ENCODE measurements at regions of chr10 and their contacts with region 1.

Region 1: GRCh38 chr10:86521678-86522509 is at the start of gene WAPL:
- DNase-seq: peak; percentile 96 to 97
- H3K4me3 ChIP-seq: peak within 1 kb of the TSS; percentile 79 to 97 (median 96)
- H3K27ac ChIP-seq: peak within 1 kb of the TSS; percentile 85 to 97 (median 89)
- H3K4me1 ChIP-seq: peaks cover 57 to 69% of the 10 kb centered on the region in 2 donors
- H3K27me3 ChIP-seq: no peaks in the 10 kb centered on the region
- CTCF ChIP-seq: no peak
- POLR2A ChIP-seq: peak; percentile 8 to 89
- total RNA-seq, gene WAPL: 44.2 to 62.1 (median 51.7) TPM

Region 2: GRCh38 chr10:86337121-86337601 is 184.7 kb before region 1 on chr10:
- intact Hi-C with region 1: no loop called
- DNase-seq: no peak
- H3K4me3 ChIP-seq: no peak overlapping the region
- H3K27ac ChIP-seq: no peak overlapping the region
- H3K4me1 ChIP-seq: peaks cover 39 to 50% of the 10 kb centered on the region in 2 donors
- H3K27me3 ChIP-seq: no peaks in the 10 kb centered on the region
- CTCF ChIP-seq: no peak
- POLR2A ChIP-seq: no peak

Region 3: DNA sequence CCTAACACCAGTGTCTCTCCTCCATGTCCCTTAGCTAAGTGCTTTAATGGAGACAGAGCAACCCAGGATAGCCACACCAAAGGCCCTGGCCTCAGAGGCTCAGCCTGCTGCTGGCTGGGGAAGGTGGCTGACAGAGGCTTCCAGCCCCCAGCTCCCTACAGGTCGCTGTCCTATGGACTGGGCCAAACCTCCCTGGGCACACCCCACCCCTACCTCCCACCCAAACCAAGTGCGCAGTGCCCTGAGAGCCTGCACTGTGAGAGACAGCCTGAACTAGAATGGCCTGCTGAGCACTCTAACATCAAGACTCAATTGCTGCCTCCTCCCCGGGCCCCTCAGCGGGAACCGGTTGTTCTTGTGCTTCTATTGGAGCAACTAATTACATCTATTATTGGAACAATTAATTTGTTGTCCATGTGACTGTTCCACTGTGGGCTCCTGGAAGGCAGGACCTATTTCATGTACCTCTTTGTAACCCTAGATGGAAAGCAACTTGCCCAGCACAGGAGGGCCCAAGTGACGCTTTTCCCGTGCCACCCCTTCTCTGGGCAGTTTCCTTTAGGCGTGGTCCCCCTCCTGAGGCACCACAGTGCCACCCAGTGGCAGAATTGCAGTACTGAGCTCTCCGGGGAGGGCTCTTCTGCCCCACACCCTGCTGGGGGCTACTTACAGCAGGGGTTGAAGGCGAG is 63.3 kb after region 1 on chr10:
- intact Hi-C with region 1: loop called (anchors 5 kb)
- DNase-seq: peak; percentile 71 to 75
- H3K4me3 ChIP-seq: no peak overlapping the region
- H3K27ac ChIP-seq: peak overlapping the region in 1 of 3 donors; percentile 75
- H3K4me1 ChIP-seq: peaks cover 0 to 17% of the 10 kb centered on the region in 2 donors
- H3K27me3 ChIP-seq: no peaks in the 10 kb centered on the region
- CTCF ChIP-seq: peak; percentile 84 to 99 (median 97)
- POLR2A ChIP-seq: no peak

Region 4: GRCh38 chr10:86945361-86946212 is 423.7 kb after region 1 on chr10:
- intact Hi-C with region 1: no loop called
- DNase-seq: no peak
- H3K4me3 ChIP-seq: no peak overlapping the region
- H3K27ac ChIP-seq: no peak overlapping the region
- H3K4me1 ChIP-seq: peaks cover 0 to 24% of the 10 kb centered on the region in 2 donors
- H3K27me3 ChIP-seq: no peaks in the 10 kb centered on the region
- CTCF ChIP-seq: no peak
- POLR2A ChIP-seq: no peak